ENCODE measurements at regions of chrX and their contacts with region 1.

Region 1: DNA sequence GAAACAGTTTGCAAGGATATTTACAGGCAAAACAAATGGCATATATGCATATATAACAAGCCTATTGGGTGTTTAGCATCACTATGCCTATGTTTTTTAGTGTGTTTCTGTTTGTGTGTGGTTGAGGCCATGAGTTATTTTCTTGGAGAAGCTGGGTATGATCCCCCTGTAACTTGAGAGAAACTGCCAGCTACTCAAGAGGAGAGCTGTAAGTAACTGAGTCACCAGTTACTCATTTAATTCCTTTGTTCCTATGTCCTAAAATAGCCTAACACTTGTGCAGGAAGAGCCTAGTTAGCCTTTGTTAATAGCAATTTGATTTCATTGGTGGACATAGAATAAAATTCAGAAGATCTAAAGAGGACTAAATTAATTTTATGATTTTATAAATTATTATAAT is 79.1 kb downstream of the PWWP3B start:
- DNase-seq: no peak
- H3K4me3 ChIP-seq: no peak overlapping the region
- CTCF ChIP-seq: no peak
- POLR2A ChIP-seq: no peak

Region 2: GRCh38 chrX:105715759-105716532 is 531.2 kb before region 1 on chrX:
- intact Hi-C with region 1: loop called (anchors 10 kb)
- DNase-seq: no peak
- H3K4me3 ChIP-seq: no peak overlapping the region
- CTCF ChIP-seq: no peak
- POLR2A ChIP-seq: no peak

Region 3: DNA sequence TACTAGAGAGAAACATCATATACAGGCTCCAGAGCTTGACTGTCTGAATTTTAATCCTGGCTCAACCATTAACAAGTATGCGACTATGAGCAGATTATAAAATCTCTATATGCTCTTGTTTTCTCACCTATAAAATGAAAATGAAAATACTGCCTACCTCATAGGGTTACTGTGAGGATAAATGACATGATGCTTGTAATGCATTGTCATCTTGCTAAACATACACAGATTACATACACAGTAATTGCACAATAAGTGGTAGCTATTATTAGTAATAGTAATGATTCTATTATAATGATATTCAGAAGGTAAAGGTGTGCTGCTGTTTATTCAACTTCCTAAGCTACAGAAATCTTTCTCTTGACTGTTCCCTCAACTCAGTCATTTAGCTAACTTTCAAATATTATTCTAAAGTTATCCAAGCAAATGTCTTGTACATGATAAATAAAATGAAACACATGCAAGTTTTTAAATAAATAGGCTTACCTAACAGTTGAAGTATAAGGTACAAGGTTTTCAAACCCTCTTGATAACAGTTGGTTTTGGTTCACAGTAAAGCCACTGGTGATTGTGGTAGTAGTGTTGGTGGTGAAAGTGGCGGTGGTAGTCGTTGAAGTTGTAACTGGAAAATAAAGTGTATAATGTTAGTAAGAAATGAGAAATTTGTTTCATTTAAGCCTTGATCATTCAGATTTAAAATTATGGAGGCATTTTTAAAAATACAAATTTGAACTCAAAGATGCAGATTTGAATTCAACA is 920.2 kb after region 1 on chrX:
- intact Hi-C with region 1: loop called (anchors 10 kb)
- DNase-seq: no peak
- H3K4me3 ChIP-seq: no peak overlapping the region
- CTCF ChIP-seq: no peak
- POLR2A ChIP-seq: no peak